Gastrocnemius medialis (tissue), 4 donors: ENCODE measurements at regions of chr20 and their contacts with region 1.

Region 1: DNA sequence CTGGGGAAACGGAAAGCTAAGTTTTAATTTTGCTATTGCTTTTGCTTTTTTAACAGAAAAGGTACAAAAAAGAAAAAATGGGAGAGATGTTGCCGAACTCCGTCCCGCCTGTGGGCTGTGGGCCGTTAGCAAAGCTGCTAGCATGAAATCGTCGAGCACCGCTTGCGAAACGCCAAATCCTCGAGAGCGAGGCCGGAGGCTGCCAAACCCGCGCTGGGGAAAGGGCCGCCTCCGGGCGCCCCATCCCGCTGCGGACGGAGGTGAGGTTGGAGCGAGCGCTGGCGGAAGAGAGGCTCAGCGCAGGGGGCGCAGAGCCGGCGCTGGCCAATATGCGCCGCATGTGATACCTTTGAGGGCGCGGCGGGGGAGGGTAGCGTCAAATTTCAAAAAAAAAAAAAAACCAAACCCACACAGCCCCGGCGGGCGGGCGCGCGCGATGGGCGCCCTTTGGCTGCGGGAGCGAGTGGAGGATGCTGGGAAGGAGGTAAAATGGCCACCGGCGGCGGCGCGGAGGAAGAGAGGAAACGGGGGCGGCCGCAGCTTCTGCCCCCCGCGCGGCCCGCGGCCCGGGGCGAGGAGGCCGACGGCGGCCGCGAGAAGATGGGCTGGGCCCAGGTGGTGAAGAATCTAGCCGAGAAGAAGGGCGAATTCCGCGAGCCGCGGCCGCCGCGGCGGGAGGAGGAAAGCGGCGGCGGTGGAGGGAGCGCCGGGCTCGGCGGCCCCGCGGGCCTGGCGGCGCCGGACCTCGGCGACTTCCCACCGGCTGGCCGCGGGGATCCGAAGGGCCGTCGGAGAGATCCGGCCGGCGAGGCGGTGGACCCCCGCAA is at the start of gene ZCCHC3:
- DNase-seq: peak; percentile 75 to 85
- ATAC-seq: peak; percentile 88 to 90
- H3K4me3 ChIP-seq: peak within 1 kb of the TSS; percentile 80 to 92 (median 90)
- H3K27ac ChIP-seq: peak within 1 kb of the TSS; percentile 93 to 98 (median 94)
- H3K4me1 ChIP-seq: peaks cover 26 to 35% of the 10 kb centered on the region in 2 donors
- H3K27me3 ChIP-seq: no peaks in the 10 kb centered on the region
- CTCF ChIP-seq: peak in 1 of 5 experiments; percentile 32
- POLR2A ChIP-seq: peak; percentile 59 to 76
- total RNA-seq, gene ZCCHC3: 6.7 to 9.4 (median 7.9) TPM

Region 2: DNA sequence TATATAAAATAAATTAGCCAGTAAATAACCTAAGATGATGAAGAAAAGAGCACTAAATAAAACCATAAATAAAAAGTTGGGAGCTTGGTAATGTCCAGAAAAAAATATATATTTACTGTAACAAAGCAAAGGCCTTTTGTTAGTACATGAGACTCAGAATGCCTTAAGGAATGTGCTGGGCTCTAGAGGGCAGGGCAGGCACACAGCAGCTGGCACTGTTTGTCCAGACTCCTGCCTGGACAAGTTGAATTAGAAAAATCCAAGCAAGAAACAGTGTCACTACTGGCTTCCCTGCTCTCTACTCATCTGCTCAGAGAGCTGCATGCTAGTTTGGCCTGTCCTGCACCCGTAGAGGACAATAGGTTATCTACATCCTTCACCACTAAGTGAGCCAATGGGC is 61.4 kb before region 1 on chr20:
- in situ Hi-C with region 1: no loop called
- intact Hi-C with region 1: no loop called
- DNase-seq: no peak
- ATAC-seq: no peak
- H3K4me3 ChIP-seq: no peak overlapping the region
- H3K27ac ChIP-seq: no peak overlapping the region
- H3K4me1 ChIP-seq: no peaks in the 10 kb centered on the region
- H3K27me3 ChIP-seq: no peaks in the 10 kb centered on the region
- CTCF ChIP-seq: no peak
- POLR2A ChIP-seq: no peak

Region 3: GRCh38 chr20:309841-310644 is 12.7 kb after region 1 on chr20:
- in situ Hi-C with region 1: no loop called
- intact Hi-C with region 1: loop called (anchors 1 kb)
- DNase-seq: peak; percentile 92
- ATAC-seq: peak; percentile 98 to 99
- H3K4me3 ChIP-seq: peak overlapping the region; percentile 47 to 54 (median 51)
- H3K27ac ChIP-seq: peak overlapping the region; percentile 5 to 66 (median 51)
- H3K4me1 ChIP-seq: peaks cover 5 to 10% of the 10 kb centered on the region in 2 donors
- H3K27me3 ChIP-seq: no peaks in the 10 kb centered on the region
- CTCF ChIP-seq: no peak
- POLR2A ChIP-seq: no peak

Region 4: DNA sequence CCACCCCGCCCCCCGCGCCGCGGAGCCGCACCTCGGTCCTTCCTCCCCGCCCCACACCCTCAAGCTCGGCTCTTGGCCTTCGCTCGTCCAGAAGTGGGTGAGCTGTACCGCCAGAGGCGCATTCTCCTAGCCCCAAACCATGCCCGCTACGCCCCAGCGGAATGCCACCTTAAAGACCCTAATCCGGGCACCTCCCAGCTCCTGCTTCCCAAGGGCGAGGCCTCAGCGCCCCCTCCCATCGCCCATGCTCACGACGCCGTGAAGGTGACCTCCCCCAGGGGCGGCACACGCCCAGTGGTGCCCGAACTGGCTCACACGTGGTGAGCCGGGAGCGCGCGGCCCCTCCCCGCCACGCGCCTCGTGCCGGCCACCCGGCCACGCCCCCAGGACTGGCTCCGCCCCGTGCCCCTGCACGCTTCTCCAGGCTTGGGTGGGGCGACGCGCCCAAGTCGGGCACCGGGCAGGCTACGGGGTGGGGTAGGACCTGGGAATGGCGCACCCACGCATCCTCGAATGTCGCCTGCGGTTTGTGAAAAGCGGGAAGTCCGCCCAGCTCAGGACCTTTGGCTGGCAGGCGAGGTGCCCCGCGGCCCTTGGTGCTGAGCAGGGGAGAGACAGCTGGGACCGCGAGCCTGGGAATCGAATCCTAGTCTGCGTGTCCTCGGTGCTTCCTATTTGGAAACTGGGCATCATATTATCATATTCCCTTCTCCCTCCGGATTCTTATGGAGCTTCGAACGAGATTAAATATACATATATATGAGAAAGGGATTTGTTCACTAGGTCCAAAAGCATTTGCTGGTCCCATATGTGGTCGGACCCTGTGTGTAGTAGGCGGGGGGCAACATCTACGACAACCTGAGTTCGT is 27.1 kb after region 1 on chr20:
- in situ Hi-C with region 1: no loop called
- intact Hi-C with region 1: loop called (anchors 1 kb)
- DNase-seq: peak; percentile 80 to 87
- ATAC-seq: peak; percentile 77 to 80
- H3K4me3 ChIP-seq: peak overlapping the region; percentile 67 to 73 (median 70)
- H3K27ac ChIP-seq: peak overlapping the region; percentile 80 to 93 (median 86)
- H3K4me1 ChIP-seq: peaks cover 5% of the 10 kb centered on the region in 2 donors
- H3K27me3 ChIP-seq: peaks cover 0 to 7% (median 2%) of the 10 kb centered on the region in 3 donors
- CTCF ChIP-seq: peak in 3 of 5 experiments; percentile 16 to 42 (median 25)
- POLR2A ChIP-seq: peak; percentile 83 to 84

Region 5: DNA sequence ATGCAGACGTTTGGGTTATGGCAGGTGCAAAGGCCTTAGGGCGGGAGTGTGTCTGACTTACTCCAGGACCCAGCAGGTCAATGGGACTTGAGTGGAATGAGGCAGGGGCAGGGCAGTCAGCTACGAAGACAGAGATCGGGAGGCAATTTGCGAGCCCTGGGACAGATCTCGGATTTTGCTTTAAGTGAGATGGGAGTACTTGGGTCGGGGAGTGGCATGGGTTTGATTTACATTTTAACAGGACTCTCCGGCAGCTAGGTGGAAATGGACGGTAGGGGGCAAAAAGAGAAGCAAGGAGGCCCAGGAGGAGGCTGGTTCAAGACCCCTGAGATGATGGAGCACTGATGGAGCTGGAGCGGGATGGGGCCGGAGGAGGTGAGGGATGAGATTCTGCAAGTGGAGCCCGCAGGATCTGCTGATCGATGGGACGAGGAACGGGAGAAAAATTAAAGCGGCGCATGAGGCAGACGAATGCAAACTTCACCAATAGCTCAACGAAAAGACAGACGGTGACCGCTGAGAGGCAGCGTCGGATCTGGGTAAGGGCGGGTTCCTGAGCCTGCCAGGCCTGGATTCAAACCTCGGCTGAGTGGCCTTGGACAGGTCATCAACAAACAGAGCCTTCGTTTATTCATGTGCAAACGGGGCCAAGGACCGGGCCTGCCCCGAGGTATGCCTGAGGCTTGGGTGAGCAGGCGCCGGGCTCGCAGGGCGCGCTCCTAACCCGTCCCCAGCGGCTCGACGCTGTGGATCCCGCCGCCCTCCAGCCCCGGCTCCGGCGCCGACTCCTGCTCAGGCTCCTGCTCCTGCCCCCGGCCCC is 110.0 kb after region 1 on chr20:
- in situ Hi-C with region 1: no loop called
- intact Hi-C with region 1: loop called (anchors 2 kb)
- DNase-seq: peak; percentile 57 to 73
- ATAC-seq: peak; percentile 71 to 77
- H3K4me3 ChIP-seq: peak overlapping the region; percentile 63 to 94 (median 80)
- H3K27ac ChIP-seq: peak overlapping the region; percentile 95 to 98 (median 97)
- H3K4me1 ChIP-seq: peaks cover 25 to 26% of the 10 kb centered on the region in 2 donors
- H3K27me3 ChIP-seq: no peaks in the 10 kb centered on the region
- CTCF ChIP-seq: peak in 3 of 5 experiments; percentile 25 to 36 (median 28)
- POLR2A ChIP-seq: no peak

Region 6: DNA sequence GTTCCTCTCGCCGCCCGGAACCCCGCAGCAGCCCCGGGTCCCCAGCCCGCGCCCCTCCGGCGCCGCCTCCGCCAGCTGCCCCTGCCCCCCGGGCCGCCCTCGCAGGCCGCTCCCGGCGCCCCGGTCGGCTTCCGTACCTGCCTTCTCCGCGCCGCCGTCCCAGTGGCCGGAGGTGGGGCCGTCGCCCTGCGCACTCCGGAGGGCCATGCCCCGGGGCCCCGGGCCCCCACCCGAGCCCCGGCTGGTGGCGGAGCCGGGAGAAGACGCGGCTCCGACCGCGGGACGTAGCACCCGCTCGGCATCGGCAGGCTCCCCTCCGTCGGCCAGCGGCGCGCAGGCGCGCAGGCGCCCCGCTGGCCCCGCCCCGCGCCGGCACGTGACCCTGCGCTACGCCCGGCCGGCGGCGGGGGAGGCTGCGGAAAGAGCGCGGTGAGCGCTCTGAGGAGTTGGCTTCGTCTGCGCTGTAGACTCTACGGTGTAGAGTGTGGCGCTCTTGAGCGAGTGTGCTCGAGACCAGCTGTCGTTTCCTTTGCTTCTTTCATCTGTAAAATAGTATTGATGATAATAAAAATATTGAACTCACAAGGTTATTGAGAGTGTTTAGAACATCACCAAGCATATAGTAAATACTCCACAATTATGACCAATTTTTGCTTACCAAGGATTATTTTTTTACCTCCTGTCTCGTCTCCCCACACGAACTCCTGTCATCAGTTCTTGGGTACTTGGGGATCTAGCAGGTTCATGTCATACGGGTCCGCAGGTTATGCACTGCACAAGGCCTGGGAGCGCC is 165.1 kb after region 1 on chr20 and contains the start of gene TBC1D20:
- in situ Hi-C with region 1: no loop called
- intact Hi-C with region 1: loop called (anchors 5 kb)
- DNase-seq: peak; percentile 64 to 81
- ATAC-seq: peak; percentile 95 to 97
- H3K4me3 ChIP-seq: peak within 1 kb of the TSS; percentile 63 to 92 (median 82)
- H3K27ac ChIP-seq: peak within 1 kb of the TSS; percentile 79 to 96 (median 92)
- H3K4me1 ChIP-seq: peaks cover 32 to 40% of the 10 kb centered on the region in 2 donors
- H3K27me3 ChIP-seq: no peaks in the 10 kb centered on the region
- CTCF ChIP-seq: peak in 2 of 5 experiments; percentile 29 to 32
- POLR2A ChIP-seq: peak; percentile 92 to 94
- total RNA-seq, gene TBC1D20: 28.9 to 39.0 (median 34.0) TPM

Region 7: GRCh38 chr20:517221-517620 is 219.9 kb after region 1 on chr20:
- in situ Hi-C with region 1: no loop called
- intact Hi-C with region 1: no loop called
- DNase-seq: no peak
- ATAC-seq: no peak
- H3K4me3 ChIP-seq: no peak overlapping the region
- H3K27ac ChIP-seq: no peak overlapping the region
- H3K4me1 ChIP-seq: peaks cover 30 to 38% of the 10 kb centered on the region in 2 donors
- H3K27me3 ChIP-seq: no peaks in the 10 kb centered on the region
- CTCF ChIP-seq: no peak
- POLR2A ChIP-seq: no peak

Region 8: GRCh38 chr20:528923-529604 is 231.8 kb after region 1 on chr20:
- in situ Hi-C with region 1: no loop called
- intact Hi-C with region 1: no loop called
- DNase-seq: peak in 1 of 2 donors; percentile 14
- ATAC-seq: peak; percentile 92 to 95
- H3K4me3 ChIP-seq: no peak overlapping the region
- H3K27ac ChIP-seq: peak overlapping the region in 1 of 4 donors; percentile 27
- H3K4me1 ChIP-seq: peaks cover 19 to 29% of the 10 kb centered on the region in 2 donors
- H3K27me3 ChIP-seq: no peaks in the 10 kb centered on the region
- CTCF ChIP-seq: no peak
- POLR2A ChIP-seq: no peak